ENCODE measurements at regions of chr6 and their contacts with region 1.

Region 1: GRCh38 chr6:142692942-142693341 is 252.0 kb downstream of the HIVEP2 start:
- DNase-seq: no peak
- ATAC-seq: peak; percentile 91
- H3K4me3 ChIP-seq: no peak overlapping the region
- H3K27ac ChIP-seq: no peak overlapping the region
- H3K4me1 ChIP-seq: peaks cover 3% of the 10 kb centered on the region; the same call in 1 of the 2 replicates
- H3K27me3 ChIP-seq: no peaks in the 10 kb centered on the region
- CTCF ChIP-seq: peak; percentile 87 to 93 (median 89)
- EP300 ChIP-seq: no peak
- POLR2A ChIP-seq: no peak
- RAD21 ChIP-seq: peak; percentile 98

Region 2: GRCh38 chr6:142112451-142113061 is 580.4 kb before region 1 on chr6:
- CTCF ChIA-PET with region 1: no interaction called
- POLR2A ChIA-PET with region 1: no interaction called
- RAD21 ChIA-PET with region 1: no interaction called
- SMC1A ChIA-PET with region 1: no interaction called
- in situ Hi-C with region 1: no loop called
- intact Hi-C with region 1: no loop called
- DNase-seq: peak; percentile 4
- ATAC-seq: peak; percentile 61
- H3K4me3 ChIP-seq: no peak overlapping the region
- H3K27ac ChIP-seq: no peak overlapping the region
- H3K4me1 ChIP-seq: no peaks in the 10 kb centered on the region
- H3K27me3 ChIP-seq: no peaks in the 10 kb centered on the region
- CTCF ChIP-seq: peak; percentile 73 to 85 (median 75)
- EP300 ChIP-seq: no peak
- POLR2A ChIP-seq: no peak
- RAD21 ChIP-seq: peak; percentile 86

Region 3: GRCh38 chr6:142746524-142746923 is 53.6 kb after region 1 on chr6:
- CTCF ChIA-PET with region 1: interaction called, 16 read pairs
- POLR2A ChIA-PET with region 1: no interaction called
- RAD21 ChIA-PET with region 1: interaction called, 5 read pairs
- SMC1A ChIA-PET with region 1: interaction called, 31 read pairs
- in situ Hi-C with region 1: no loop called
- intact Hi-C with region 1: no loop called
- DNase-seq: no peak
- ATAC-seq: peak; percentile 92
- H3K4me3 ChIP-seq: no peak overlapping the region
- H3K27ac ChIP-seq: no peak overlapping the region
- H3K4me1 ChIP-seq: no peaks in the 10 kb centered on the region
- H3K27me3 ChIP-seq: no peaks in the 10 kb centered on the region
- CTCF ChIP-seq: peak; percentile 46 to 60 (median 56); a peak in 5 of 6 replicates
- EP300 ChIP-seq: no peak
- POLR2A ChIP-seq: no peak
- RAD21 ChIP-seq: peak; percentile 67

Region 4: DNA sequence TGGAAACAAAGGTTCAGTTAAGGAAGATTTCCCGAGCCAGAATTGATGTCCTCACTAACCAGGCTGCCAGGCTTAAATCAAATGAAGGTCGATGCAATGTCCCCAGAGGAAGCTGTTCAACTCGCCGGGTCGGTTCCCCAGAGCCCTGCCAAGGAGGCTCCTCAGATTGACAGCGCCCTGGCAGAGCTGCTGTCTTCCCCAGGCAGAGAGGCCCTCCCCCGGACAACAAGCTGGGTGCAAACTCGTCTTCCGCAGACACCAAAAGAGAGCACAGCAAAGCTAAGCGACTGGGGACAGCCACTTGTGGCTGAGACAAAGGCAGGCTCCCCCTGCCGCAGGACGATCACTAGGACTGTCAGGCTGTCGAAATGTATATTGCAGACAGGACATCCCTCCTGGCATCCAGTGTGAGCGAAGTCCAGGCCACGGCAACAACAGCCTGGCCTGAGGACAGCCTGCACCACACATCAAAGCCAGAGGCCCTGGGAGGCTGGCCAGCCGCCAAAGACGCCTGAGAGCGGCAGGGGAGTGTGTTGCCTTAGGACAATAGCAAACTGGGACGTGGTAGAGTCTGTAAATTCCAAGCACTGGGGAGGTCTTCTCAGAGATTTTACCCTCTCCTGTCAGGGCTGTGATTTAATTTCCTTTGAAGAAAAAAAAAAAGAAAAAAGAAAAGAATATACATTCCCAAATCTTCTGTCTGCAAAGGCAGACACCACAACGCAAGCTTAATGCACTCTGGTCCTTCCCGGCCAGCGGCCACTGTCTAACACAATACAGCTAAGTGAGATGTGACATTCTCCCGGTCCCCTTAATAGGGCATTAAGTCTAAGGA is 152.9 kb after region 1 on chr6:
- CTCF ChIA-PET with region 1: interaction called, 5 read pairs
- POLR2A ChIA-PET with region 1: interaction called, 3 read pairs
- RAD21 ChIA-PET with region 1: interaction called, 4 read pairs
- SMC1A ChIA-PET with region 1: interaction called, 11 read pairs
- in situ Hi-C with region 1: no loop called
- intact Hi-C with region 1: loop called (anchors 5 kb)
- DNase-seq: no peak
- ATAC-seq: peak; percentile 23
- H3K4me3 ChIP-seq: peak overlapping the region; percentile 48; the same call in 1 of the 2 replicates
- H3K27ac ChIP-seq: peak overlapping the region; percentile 98
- H3K4me1 ChIP-seq: peaks cover 81% of the 10 kb centered on the region
- H3K27me3 ChIP-seq: no peaks in the 10 kb centered on the region
- CTCF ChIP-seq: no peak
- EP300 ChIP-seq: no peak
- POLR2A ChIP-seq: peak; percentile 67
- RAD21 ChIP-seq: no peak

Region 5: DNA sequence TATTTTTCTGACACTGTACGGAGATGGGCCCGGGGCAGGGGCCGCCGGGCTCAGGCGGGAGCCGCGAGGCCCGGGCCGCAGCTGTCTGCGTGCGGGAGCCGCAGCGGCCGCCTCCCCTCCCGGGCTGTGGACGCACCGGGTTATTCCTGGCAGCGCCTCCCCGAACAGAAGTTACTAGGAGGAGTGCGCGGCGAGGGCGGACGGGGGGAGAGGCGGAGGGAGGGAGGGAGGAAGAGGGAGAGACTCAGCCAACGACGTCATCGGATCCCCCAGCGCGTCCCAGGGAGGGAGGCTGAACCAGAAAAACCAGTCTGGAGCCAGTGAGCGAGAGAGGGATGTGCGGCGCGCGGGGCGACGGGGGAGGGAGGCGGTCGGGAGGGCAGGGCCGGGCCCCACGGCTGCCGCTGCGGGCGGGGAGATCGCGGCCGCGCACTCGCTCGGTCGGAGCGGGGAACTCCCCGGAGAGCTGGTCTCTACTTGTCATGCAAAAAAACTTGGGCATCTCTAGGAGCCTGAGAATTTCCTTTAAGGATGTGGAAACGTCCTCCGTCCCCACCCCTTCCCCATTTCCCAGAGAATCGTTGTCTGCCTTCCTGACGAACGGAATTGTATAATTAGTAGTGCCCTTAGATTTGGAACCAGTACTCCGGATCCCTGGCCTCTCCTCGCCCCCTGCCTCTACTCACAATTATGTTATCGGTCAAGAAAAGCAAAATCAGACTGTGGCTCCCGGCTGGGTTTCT is 253.4 kb after region 1 on chr6:
- CTCF ChIA-PET with region 1: interaction called, 19 read pairs
- POLR2A ChIA-PET with region 1: interaction called, 6 read pairs
- RAD21 ChIA-PET with region 1: interaction called, 8 read pairs
- SMC1A ChIA-PET with region 1: interaction called, 18 read pairs
- in situ Hi-C with region 1: loop called (anchors 5 kb)
- intact Hi-C with region 1: loop called (anchors 5 kb)
- DNase-seq: no peak
- ATAC-seq: peak; percentile 51
- H3K4me3 ChIP-seq: peak overlapping the region; percentile 94
- H3K27ac ChIP-seq: peak overlapping the region; percentile 98
- H3K4me1 ChIP-seq: peaks cover 9% of the 10 kb centered on the region; the same call in 1 of the 2 replicates
- H3K27me3 ChIP-seq: no peaks in the 10 kb centered on the region
- CTCF ChIP-seq: no peak
- EP300 ChIP-seq: no peak; a peak in 1 of 4 replicates
- POLR2A ChIP-seq: peak; percentile 52; the same call in 1 of the 2 replicates
- RAD21 ChIP-seq: no peak

Region 6: GRCh38 chr6:143034689-143035334 is 341.9 kb after region 1 on chr6:
- CTCF ChIA-PET with region 1: interaction called, 6 read pairs
- POLR2A ChIA-PET with region 1: no interaction called
- RAD21 ChIA-PET with region 1: no interaction called
- SMC1A ChIA-PET with region 1: interaction called, 3 read pairs
- in situ Hi-C with region 1: loop called (anchors 5 kb)
- intact Hi-C with region 1: no loop called
- DNase-seq: no peak
- ATAC-seq: peak; percentile 87
- H3K4me3 ChIP-seq: no peak overlapping the region
- H3K27ac ChIP-seq: no peak overlapping the region
- H3K4me1 ChIP-seq: peaks cover 14% of the 10 kb centered on the region
- H3K27me3 ChIP-seq: peaks cover 0 to 2% of the 10 kb centered on the region in 2 experiments; a peak in 1 of 4 replicates
- CTCF ChIP-seq: no peak
- EP300 ChIP-seq: no peak
- POLR2A ChIP-seq: no peak
- RAD21 ChIP-seq: no peak

Region 7: DNA sequence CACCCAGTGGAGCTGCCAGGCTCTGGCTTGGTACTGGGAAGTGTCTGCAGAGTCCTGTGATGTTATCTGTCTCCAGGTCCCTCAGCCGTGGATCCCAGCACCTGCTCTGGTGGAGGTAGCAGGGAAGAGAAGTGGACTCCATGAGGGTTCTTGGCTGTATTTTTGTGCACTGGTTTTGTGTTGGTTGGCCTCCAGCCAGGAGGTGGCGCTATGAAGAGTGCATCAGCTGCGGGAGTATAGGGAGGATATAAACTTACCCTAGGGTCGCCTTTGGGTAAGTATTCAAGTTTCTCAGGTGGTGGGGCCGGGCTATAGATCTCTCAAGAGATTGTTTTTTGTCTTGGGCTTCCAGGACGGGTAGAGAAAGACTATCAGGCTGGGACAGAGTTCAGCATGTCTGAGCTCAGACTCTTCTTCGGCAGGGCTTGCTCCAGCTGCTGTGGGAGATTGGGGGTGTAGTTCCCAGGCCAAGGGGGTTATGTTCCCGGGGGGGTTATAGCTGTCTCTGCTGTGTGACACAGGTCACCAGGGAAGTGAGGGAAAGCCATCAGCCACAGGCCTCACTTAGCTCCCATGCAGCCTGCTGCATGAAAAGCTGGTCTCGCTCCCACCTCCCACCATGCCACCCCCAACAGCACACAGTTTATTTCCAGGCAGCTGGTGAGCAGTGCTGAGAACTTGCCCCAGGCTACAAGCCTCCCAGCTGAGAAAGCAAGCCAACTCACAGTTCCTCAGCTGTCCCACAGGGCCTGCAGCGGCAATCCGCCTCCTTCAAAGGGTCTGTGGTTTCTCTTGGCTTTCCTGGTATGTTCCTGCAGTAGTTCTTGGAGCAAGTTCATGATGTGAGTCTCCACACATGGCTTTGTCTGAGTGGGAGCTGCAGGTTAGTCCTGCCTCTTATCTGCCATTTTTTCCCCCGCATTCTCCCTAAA is 483.4 kb after region 1 on chr6:
- CTCF ChIA-PET with region 1: no interaction called
- POLR2A ChIA-PET with region 1: no interaction called
- RAD21 ChIA-PET with region 1: no interaction called
- SMC1A ChIA-PET with region 1: no interaction called
- in situ Hi-C with region 1: no loop called
- intact Hi-C with region 1: no loop called
- DNase-seq: no peak
- ATAC-seq: no peak
- H3K4me3 ChIP-seq: no peak overlapping the region
- H3K27ac ChIP-seq: no peak overlapping the region
- H3K4me1 ChIP-seq: no peaks in the 10 kb centered on the region
- H3K27me3 ChIP-seq: no peaks in the 10 kb centered on the region
- CTCF ChIP-seq: no peak; a peak in 1 of 6 replicates
- EP300 ChIP-seq: no peak
- POLR2A ChIP-seq: no peak
- RAD21 ChIP-seq: no peak

Region 8: DNA sequence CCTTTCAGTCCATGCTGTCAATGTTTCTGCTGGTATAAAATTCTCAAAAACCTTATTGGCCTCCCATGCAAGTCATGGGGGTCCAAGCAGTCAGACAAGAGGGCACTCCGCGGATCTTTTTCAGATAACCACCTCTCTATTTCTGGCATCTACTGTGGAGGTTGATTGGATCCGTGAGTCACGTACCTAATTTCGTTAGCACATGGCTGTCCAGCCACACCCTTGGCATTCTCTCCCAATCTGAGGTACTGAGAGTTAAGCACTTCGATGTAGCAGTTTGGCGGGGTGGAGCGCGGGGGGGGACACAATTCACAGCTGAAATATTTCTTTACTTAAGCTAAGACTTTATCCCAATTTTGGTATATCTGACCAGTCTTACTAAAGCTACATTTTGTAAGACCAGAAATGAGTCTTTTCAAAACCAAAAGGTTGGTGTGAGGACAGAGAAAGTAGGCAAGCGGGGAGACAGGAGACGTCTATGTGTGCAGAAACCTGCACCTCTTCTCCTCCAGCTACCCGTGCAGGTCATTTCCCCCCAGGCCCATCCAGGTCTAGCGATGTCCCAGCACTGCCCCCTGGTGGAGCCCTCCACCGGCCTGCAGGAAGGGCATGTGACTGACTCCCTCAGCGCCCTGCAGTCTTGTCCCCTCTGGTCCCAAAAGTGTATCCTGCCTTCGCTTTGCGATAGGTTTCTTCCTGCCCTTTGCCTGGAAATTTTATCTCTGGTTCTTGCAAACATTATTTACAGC is 644.4 kb after region 1 on chr6:
- CTCF ChIA-PET with region 1: interaction called, 62 read pairs
- POLR2A ChIA-PET with region 1: no interaction called
- RAD21 ChIA-PET with region 1: interaction called, 28 read pairs
- SMC1A ChIA-PET with region 1: interaction called, 27 read pairs
- in situ Hi-C with region 1: no loop called
- intact Hi-C with region 1: loop called (anchors 1 kb)
- DNase-seq: no peak
- ATAC-seq: peak; percentile 98
- H3K4me3 ChIP-seq: no peak overlapping the region
- H3K27ac ChIP-seq: no peak overlapping the region
- H3K4me1 ChIP-seq: no peaks in the 10 kb centered on the region
- H3K27me3 ChIP-seq: no peaks in the 10 kb centered on the region
- CTCF ChIP-seq: peak; percentile 60 to 83 (median 66)
- EP300 ChIP-seq: no peak
- POLR2A ChIP-seq: no peak
- RAD21 ChIP-seq: peak; percentile 33

Region 9: DNA sequence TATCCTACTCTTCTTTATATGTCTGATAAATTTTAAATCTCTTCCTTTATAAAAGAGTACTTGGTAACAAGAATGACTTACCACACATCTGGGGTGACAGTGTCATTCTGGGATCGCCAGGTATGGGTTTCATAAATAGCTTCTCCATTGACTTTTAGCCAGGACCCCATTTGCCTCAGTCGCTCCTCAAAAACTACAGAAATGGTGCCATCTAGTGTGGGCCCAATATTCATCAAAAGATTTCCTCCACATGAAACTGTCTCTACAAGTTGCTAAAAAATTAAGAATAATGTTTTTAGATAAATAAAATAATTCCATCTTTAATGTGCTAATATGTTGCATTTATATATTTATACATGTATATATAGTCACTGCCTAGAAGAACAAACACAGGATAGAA is 808.9 kb after region 1 on chr6:
- CTCF ChIA-PET with region 1: no interaction called
- POLR2A ChIA-PET with region 1: no interaction called
- RAD21 ChIA-PET with region 1: interaction called, 3 read pairs
- SMC1A ChIA-PET with region 1: no interaction called
- in situ Hi-C with region 1: no loop called
- intact Hi-C with region 1: loop called (anchors 5 kb)
- DNase-seq: no peak
- ATAC-seq: no peak
- H3K4me3 ChIP-seq: no peak overlapping the region
- H3K27ac ChIP-seq: no peak overlapping the region
- H3K4me1 ChIP-seq: peaks cover 12% of the 10 kb centered on the region
- H3K27me3 ChIP-seq: no peaks in the 10 kb centered on the region
- CTCF ChIP-seq: no peak
- EP300 ChIP-seq: no peak
- POLR2A ChIP-seq: no peak
- RAD21 ChIP-seq: no peak